ENCODE measurements at regions of chr11 and their contacts with region 1.

Region 1: GRCh38 chr11:6979365-6979978 is 40.7 kb downstream of the ZNF214 start:
- DNase-seq: no peak
- ATAC-seq: no peak
- H3K4me3 ChIP-seq: no peak overlapping the region
- H3K27ac ChIP-seq: no peak overlapping the region
- H3K4me1 ChIP-seq: no peaks in the 10 kb centered on the region
- H3K27me3 ChIP-seq: no peaks in the 10 kb centered on the region; a peak in 1 of 5 replicates
- CTCF ChIP-seq: no peak
- EP300 ChIP-seq: no peak
- POLR2A ChIP-seq: no peak
- RAD21 ChIP-seq: no peak

Region 2: GRCh38 chr11:7019500-7020182 is 40.2 kb after region 1 on chr11:
- CTCF ChIA-PET with region 1: no interaction called
- POLR2A ChIA-PET with region 1: no interaction called
- in situ Hi-C with region 1: no loop called
- intact Hi-C with region 1: loop called (anchors 1 kb)
- DNase-seq: no peak
- ATAC-seq: peak; percentile 73
- H3K4me3 ChIP-seq: peak overlapping the region; percentile 66 to 80 (median 75)
- H3K27ac ChIP-seq: peak overlapping the region; percentile 35
- H3K4me1 ChIP-seq: peaks cover 15% of the 10 kb centered on the region
- H3K27me3 ChIP-seq: peaks cover 0 to 3% of the 10 kb centered on the region in 2 experiments; a peak in 1 of 5 replicates
- CTCF ChIP-seq: no peak
- EP300 ChIP-seq: no peak
- POLR2A ChIP-seq: no peak
- RAD21 ChIP-seq: no peak

Measured in HepG2 (cell line).